Endothelial cell of umbilical vein (primary cell): ENCODE measurements at regions of chr11 and their contacts with region 1.

Region 1: GRCh38 chr11:48081151-48082010 is 101.0 kb downstream of the PTPRJ start:
- DNase-seq: peak; percentile 85
- H3K4me3 ChIP-seq: no peak overlapping the region
- H3K27ac ChIP-seq: peak overlapping the region; percentile 55
- H3K4me1 ChIP-seq: peaks cover 8% of the 10 kb centered on the region
- H3K27me3 ChIP-seq: no peaks in the 10 kb centered on the region
- CTCF ChIP-seq: no peak
- POLR2A ChIP-seq: no peak

Region 2: GRCh38 chr11:48063424-48063978 is 17.9 kb before region 1 on chr11:
- CTCF ChIA-PET with region 1: interaction called, 3 read pairs
- POLR2A ChIA-PET with region 1: no interaction called
- dilution Hi-C with region 1: no loop called
- intact Hi-C with region 1: loop called (anchors 2 kb)
- DNase-seq: peak; percentile 57
- H3K4me3 ChIP-seq: no peak overlapping the region
- H3K27ac ChIP-seq: no peak overlapping the region
- H3K4me1 ChIP-seq: peaks cover 22% of the 10 kb centered on the region
- H3K27me3 ChIP-seq: no peaks in the 10 kb centered on the region
- CTCF ChIP-seq: no peak
- POLR2A ChIP-seq: no peak

Region 3: GRCh38 chr11:48270621-48271020 is 189.2 kb after region 1 on chr11:
- CTCF ChIA-PET with region 1: no interaction called
- POLR2A ChIA-PET with region 1: no interaction called
- dilution Hi-C with region 1: no loop called
- intact Hi-C with region 1: no loop called
- DNase-seq: no peak
- H3K4me3 ChIP-seq: no peak overlapping the region
- H3K27ac ChIP-seq: no peak overlapping the region
- H3K4me1 ChIP-seq: no peaks in the 10 kb centered on the region
- H3K27me3 ChIP-seq: no peaks in the 10 kb centered on the region
- CTCF ChIP-seq: no peak
- POLR2A ChIP-seq: no peak